ENCODE measurements at regions of chr22 and their contacts with region 1.

Region 1: DNA sequence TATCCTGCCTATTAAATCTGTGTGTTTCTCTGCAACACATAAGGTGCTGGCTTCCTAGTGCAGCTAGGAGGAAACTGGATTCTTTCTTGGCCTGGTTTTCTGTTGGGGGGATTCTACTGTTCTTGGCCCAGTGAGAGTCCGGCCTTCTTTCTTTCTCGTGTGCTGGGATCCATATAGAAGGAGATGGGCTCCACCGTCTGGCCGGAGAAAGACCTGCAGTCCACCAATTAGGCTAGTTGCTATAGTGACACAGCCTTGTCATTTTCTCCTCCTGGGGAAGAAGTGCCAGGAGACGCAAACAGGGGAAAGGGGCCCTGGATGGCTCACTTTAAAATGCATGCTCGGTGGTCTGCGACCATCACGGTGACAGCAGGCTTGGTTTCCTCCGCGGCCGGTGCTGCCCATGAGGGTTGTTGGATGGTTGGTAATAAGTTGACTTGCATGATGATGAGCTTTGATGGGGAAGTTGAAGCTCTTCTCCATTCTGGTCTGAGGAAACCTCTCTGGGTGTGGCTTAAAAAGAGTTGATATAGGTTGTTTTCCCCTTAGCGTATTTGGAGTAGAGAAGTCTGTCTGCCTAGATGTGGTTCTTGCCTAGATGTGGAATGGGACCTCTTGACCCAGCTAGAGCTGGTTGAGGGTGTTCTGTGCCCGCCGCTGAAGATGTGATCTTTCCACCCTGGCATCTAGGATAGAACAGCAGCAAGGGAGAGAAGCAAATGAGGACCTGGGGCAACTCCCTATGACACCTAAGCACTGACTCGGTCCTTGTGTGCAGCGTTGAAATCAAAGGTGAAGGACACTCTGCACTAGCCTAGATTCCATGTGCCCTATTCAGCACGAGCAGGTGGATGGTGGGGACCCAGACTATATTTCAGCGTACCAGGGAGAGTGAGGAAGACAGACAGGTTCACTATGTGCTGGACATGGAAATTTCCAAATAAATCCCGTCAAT is 1335.0 kb downstream of the BRD1 start:
- DNase-seq: no peak
- H3K4me3 ChIP-seq: no peak overlapping the region
- H3K4me3 Mint-ChIP-seq: no peak overlapping the region
- H3K27ac ChIP-seq: no peak overlapping the region
- H3K27ac Mint-ChIP-seq: no peak overlapping the region
- H3K4me1 ChIP-seq: no peaks in the 10 kb centered on the region
- H3K4me1 Mint-ChIP-seq: peaks cover 0 to 4% (median under 1%) of the 10 kb centered on the region in 4 donors
- H3K27me3 ChIP-seq: peaks cover 6% of the 10 kb centered on the region
- H3K27me3 Mint-ChIP-seq: peaks cover 29 to 37% of the 10 kb centered on the region in 2 donors

Region 2: GRCh38 chr22:47213571-47214230 is 1278.9 kb before region 1 on chr22:
- CTCF ChIA-PET with region 1: no interaction called
- POLR2A ChIA-PET with region 1: no interaction called
- intact Hi-C with region 1: loop called (anchors 10 kb)
- DNase-seq: peak in 4 of 5 donors; percentile 32 to 50 (median 37)
- H3K4me3 ChIP-seq: no peak overlapping the region
- H3K4me3 Mint-ChIP-seq: no peak overlapping the region
- H3K27ac ChIP-seq: no peak overlapping the region
- H3K27ac Mint-ChIP-seq: peak overlapping the region in 2 of 7 donors; percentile 43 to 83
- H3K4me1 ChIP-seq: no peaks in the 10 kb centered on the region
- H3K4me1 Mint-ChIP-seq: peaks cover 0 to 5% (median 3%) of the 10 kb centered on the region in 4 donors
- H3K27me3 ChIP-seq: no peaks in the 10 kb centered on the region
- H3K27me3 Mint-ChIP-seq: peaks cover 0 to 5% of the 10 kb centered on the region in 2 donors